ENCODE measurements at regions of chr20 and their contacts with region 1.

Region 1: GRCh38 chr20:19205977-19206396 is 6.5 kb upstream of the SLC24A3 start:
- DNase-seq: peak; percentile 61 to 81
- ATAC-seq: peak in 7 of 8 donors; percentile 19 to 69 (median 58)
- H3K4me3 ChIP-seq: no peak overlapping the region
- H3K27ac ChIP-seq: no peak overlapping the region
- H3K4me1 ChIP-seq: no peaks in the 10 kb centered on the region
- H3K27me3 ChIP-seq: peaks cover 0 to 24% (median 1%) of the 10 kb centered on the region in 7 donors
- CTCF ChIP-seq: peak; percentile 73 to 92 (median 90)

Region 2: GRCh38 chr20:18632196-18633009 is 573.6 kb before region 1 on chr20:
- intact Hi-C with region 1: loop called in 1 of 10 experiments (anchors 10 kb)
- DNase-seq: peak; percentile 53 to 57
- ATAC-seq: peak; percentile 83 to 94 (median 88)
- H3K4me3 ChIP-seq: no peak overlapping the region
- H3K27ac ChIP-seq: no peak overlapping the region
- H3K4me1 ChIP-seq: no peaks in the 10 kb centered on the region
- H3K27me3 ChIP-seq: no peaks in the 10 kb centered on the region
- CTCF ChIP-seq: peak; percentile 59 to 94 (median 83)

Region 3: DNA sequence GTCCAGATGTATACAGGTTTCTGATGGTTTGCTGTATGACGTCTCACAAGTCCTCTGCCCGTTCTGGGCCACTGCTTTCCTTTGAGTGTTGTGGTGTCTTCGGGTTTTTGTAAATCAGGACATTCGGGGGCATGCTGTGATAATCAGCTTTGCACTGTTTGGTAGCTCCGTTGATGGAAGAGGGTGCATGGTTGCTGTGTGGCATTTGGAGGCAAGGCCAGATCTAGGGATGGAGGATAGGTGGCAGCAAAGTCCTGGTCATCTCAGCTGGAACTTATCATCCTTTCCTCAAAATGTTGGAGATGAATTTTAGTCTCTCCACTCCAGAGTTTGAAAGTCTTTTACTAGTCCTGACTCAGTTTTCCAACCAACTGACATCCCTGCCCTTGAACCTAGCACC is 301.4 kb before region 1 on chr20:
- intact Hi-C with region 1: loop called in 4 of 10 experiments (anchors 10 kb)
- DNase-seq: no peak
- ATAC-seq: peak in 2 of 8 donors; percentile 51 to 53
- H3K4me3 ChIP-seq: no peak overlapping the region
- H3K27ac ChIP-seq: no peak overlapping the region
- H3K4me1 ChIP-seq: no peaks in the 10 kb centered on the region
- H3K27me3 ChIP-seq: no peaks in the 10 kb centered on the region
- CTCF ChIP-seq: peak in 7 of 9 donors; percentile 35 to 61 (median 50)

Region 4: GRCh38 chr20:19583532-19584175 is 377.7 kb after region 1 on chr20:
- intact Hi-C with region 1: loop called (anchors 1 to 5 kb)
- DNase-seq: peak; percentile 54 to 76
- ATAC-seq: peak; percentile 58 to 87 (median 80)
- H3K4me3 ChIP-seq: no peak overlapping the region
- H3K27ac ChIP-seq: no peak overlapping the region
- H3K4me1 ChIP-seq: peaks cover 0 to under 1% (median 0%) of the 10 kb centered on the region in 9 donors
- H3K27me3 ChIP-seq: peaks cover 0 to 24% (median 5%) of the 10 kb centered on the region in 7 donors
- CTCF ChIP-seq: peak; percentile 60 to 87 (median 83)